ENCODE measurements at regions of chr7 and their contacts with region 1.

Region 1: GRCh38 chr7:128818694-128819093 is 11.5 kb upstream of the FLNC start:
- DNase-seq: no peak
- H3K4me3 ChIP-seq: no peak overlapping the region
- H3K27ac ChIP-seq: no peak overlapping the region
- H3K4me1 ChIP-seq: no peaks in the 10 kb centered on the region
- H3K27me3 ChIP-seq: no peaks in the 10 kb centered on the region
- CTCF ChIP-seq: no peak
- EP300 ChIP-seq: no peak
- POLR2A ChIP-seq: no peak
- RAD21 ChIP-seq: no peak

Region 2: GRCh38 chr7:128236924-128237586 is 581.6 kb before region 1 on chr7:
- CTCF ChIA-PET with region 1: no interaction called
- POLR2A ChIA-PET with region 1: no interaction called
- DNase-seq: no peak
- H3K4me3 ChIP-seq: no peak overlapping the region
- H3K27ac ChIP-seq: no peak overlapping the region
- H3K4me1 ChIP-seq: no peaks in the 10 kb centered on the region
- H3K27me3 ChIP-seq: no peaks in the 10 kb centered on the region
- CTCF ChIP-seq: no peak
- EP300 ChIP-seq: no peak
- POLR2A ChIP-seq: no peak
- RAD21 ChIP-seq: no peak

Region 3: GRCh38 chr7:128807191-128807590 is 11.5 kb before region 1 on chr7:
- CTCF ChIA-PET with region 1: interaction called, 4 read pairs
- POLR2A ChIA-PET with region 1: interaction called, 21 read pairs
- DNase-seq: no peak
- H3K4me3 ChIP-seq: no peak overlapping the region
- H3K27ac ChIP-seq: no peak overlapping the region
- H3K4me1 ChIP-seq: peaks cover 0 to 2% (median under 1%) of the 10 kb centered on the region in 4 experiments; a peak in 3 of 7 replicates
- H3K27me3 ChIP-seq: no peaks in the 10 kb centered on the region
- CTCF ChIP-seq: no peak
- EP300 ChIP-seq: no peak
- POLR2A ChIP-seq: no peak
- RAD21 ChIP-seq: no peak

Region 4: DNA sequence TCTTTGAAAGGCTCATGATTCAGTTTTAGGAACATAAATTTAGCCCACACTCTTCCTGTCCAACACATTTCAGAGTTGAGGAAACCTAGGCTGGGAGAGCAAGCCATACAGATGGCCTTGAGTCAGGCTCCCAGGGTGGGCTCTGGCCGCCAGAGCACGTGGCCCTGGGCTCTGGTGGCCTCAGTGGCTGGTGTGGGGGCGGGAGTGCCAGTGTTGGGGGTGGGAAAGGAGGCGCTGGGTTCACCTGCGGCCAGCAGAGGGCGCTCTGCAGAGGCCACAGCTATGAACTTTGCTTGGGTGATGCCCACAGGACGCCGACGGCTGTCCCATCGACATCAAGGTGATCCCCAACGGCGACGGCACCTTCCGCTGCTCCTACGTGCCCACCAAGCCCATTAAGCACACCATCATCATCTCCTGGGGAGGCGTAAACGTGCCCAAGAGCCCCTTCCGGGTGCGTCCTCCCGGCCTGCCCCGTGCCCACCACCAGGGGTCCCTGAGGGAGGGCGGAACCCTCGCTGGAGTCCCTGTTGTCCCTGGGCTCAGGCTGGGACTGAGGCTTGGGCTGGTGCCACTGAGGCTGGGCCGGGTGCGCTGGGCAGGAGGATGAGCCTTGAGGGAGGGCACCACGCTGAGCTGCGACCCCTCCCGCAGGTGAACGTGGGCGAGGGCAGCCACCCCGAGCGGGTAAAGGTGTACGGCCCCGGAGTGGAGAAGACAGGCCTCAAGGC is 23.4 kb after region 1 on chr7:
- CTCF ChIA-PET with region 1: interaction called, 17 read pairs
- POLR2A ChIA-PET with region 1: no interaction called
- DNase-seq: peak in 1 of 2 experiments; percentile 88
- H3K4me3 ChIP-seq: no peak overlapping the region
- H3K27ac ChIP-seq: no peak overlapping the region
- H3K4me1 ChIP-seq: peaks cover 0 to 10% (median 5%) of the 10 kb centered on the region in 4 experiments; a peak in 6 of 7 replicates
- H3K27me3 ChIP-seq: no peaks in the 10 kb centered on the region; a peak in 1 of 7 replicates
- CTCF ChIP-seq: peak in 2 of 3 experiments; percentile 71 to 74; a peak in 3 of 4 replicates
- EP300 ChIP-seq: no peak; a peak in 1 of 3 replicates
- POLR2A ChIP-seq: no peak
- RAD21 ChIP-seq: peak; percentile 33 to 53; a peak in 3 of 4 replicates